ENCODE measurements at regions of chr16 and their contacts with region 1.

Region 1: GRCh38 chr16:72856797-72857196 is 191.1 kb downstream of the ZFHX3 start:
- DNase-seq: peak in 1 of 2 experiments; percentile 71
- H3K4me3 ChIP-seq: no peak overlapping the region
- H3K27ac ChIP-seq: no peak overlapping the region
- H3K4me1 ChIP-seq: peaks cover 0 to 2% (median 0%) of the 10 kb centered on the region in 4 experiments; a peak in 1 of 7 replicates
- H3K27me3 ChIP-seq: no peaks in the 10 kb centered on the region; a peak in 2 of 7 replicates
- CTCF ChIP-seq: peak; percentile 70 to 82 (median 81)
- EP300 ChIP-seq: no peak
- POLR2A ChIP-seq: no peak
- RAD21 ChIP-seq: peak; percentile 67 to 71

Region 2: DNA sequence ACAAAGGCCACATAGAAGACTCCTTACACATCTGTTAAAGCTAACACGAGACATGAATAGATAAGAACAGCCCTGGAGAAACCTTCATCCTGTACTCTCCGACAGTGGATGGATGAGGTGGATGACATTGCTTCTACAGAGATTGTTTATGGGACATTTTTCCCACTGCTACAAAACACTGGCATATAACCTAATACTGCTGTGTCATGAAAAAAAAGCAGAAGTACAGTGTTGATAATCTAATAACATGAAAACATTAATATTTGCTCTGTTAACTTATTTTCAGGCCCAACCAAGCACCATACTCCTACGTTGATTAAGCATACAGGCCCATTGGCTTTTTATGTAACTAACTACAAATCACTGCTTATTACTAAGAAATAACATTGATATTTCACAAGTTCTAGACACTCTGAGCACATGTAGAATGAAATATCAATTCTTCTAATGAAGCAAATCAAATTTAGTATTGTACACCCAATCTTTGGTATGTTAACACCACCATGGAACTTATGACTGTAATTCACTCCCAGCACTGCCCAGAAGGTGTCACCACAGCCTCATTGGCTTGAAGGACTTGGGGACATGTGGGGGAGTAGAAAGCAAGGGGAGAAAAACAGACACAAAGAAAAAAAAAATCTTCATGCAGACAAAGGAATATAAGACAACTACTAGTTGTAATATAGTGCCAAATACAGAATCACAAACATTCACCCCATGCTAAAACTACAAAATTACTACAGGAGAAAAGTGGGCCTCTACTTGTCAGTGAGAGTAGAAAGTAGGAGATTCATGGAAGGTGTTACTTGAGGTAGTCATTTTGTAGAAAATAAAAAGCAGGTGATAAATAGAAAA is 354.8 kb before region 1 on chr16:
- CTCF ChIA-PET with region 1: interaction called, 10 read pairs
- POLR2A ChIA-PET with region 1: no interaction called
- DNase-seq: peak in 1 of 2 experiments; percentile 68
- H3K4me3 ChIP-seq: no peak overlapping the region
- H3K27ac ChIP-seq: no peak overlapping the region
- H3K4me1 ChIP-seq: no peaks in the 10 kb centered on the region
- H3K27me3 ChIP-seq: no peaks in the 10 kb centered on the region
- CTCF ChIP-seq: peak; percentile 60 to 84 (median 83)
- EP300 ChIP-seq: no peak
- POLR2A ChIP-seq: no peak
- RAD21 ChIP-seq: peak; percentile 96 to 97

Region 3: DNA sequence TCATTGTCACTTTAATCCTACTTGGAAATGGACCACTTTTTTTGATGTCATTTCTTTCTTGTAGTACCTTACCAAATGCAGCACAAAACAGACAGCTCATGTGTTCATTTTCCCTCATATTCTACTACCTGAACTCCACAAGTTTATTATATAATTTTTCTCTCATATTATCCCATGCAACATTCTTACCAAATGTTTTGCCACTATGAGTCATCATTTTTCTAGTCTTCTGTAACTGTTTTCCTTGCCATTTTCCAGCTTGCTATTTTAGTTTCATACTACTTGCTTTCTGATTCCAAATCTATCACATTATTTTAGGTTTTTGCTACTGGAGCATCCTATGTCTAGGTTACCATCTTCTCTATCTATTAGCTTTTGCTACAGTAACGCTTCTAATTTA is 141.5 kb before region 1 on chr16:
- CTCF ChIA-PET with region 1: no interaction called
- POLR2A ChIA-PET with region 1: no interaction called
- DNase-seq: no peak
- H3K4me3 ChIP-seq: no peak overlapping the region
- H3K27ac ChIP-seq: no peak overlapping the region
- H3K4me1 ChIP-seq: no peaks in the 10 kb centered on the region; a peak in 1 of 7 replicates
- H3K27me3 ChIP-seq: peaks cover 0 to 1% (median 0%) of the 10 kb centered on the region in 4 experiments; a peak in 1 of 7 replicates
- CTCF ChIP-seq: no peak
- EP300 ChIP-seq: no peak
- POLR2A ChIP-seq: no peak
- RAD21 ChIP-seq: no peak

Region 4: GRCh38 chr16:72908362-72909167 is 51.8 kb after region 1 on chr16:
- CTCF ChIA-PET with region 1: interaction called, 20 read pairs
- POLR2A ChIA-PET with region 1: no interaction called
- DNase-seq: no peak
- H3K4me3 ChIP-seq: no peak overlapping the region
- H3K27ac ChIP-seq: no peak overlapping the region
- H3K4me1 ChIP-seq: peaks cover 0 to 2% (median 0%) of the 10 kb centered on the region in 4 experiments; a peak in 2 of 7 replicates
- H3K27me3 ChIP-seq: no peaks in the 10 kb centered on the region
- CTCF ChIP-seq: no peak
- EP300 ChIP-seq: no peak
- POLR2A ChIP-seq: no peak
- RAD21 ChIP-seq: no peak

Region 5: GRCh38 chr16:72938795-72939164 is 82.0 kb after region 1 on chr16:
- CTCF ChIA-PET with region 1: interaction called, 15 read pairs
- POLR2A ChIA-PET with region 1: no interaction called
- DNase-seq: no peak
- H3K4me3 ChIP-seq: no peak overlapping the region
- H3K27ac ChIP-seq: no peak overlapping the region
- H3K4me1 ChIP-seq: peaks cover 5 to 17% (median 7%) of the 10 kb centered on the region in 4 experiments; a peak in 6 of 7 replicates
- H3K27me3 ChIP-seq: no peaks in the 10 kb centered on the region
- CTCF ChIP-seq: no peak
- EP300 ChIP-seq: no peak
- POLR2A ChIP-seq: no peak
- RAD21 ChIP-seq: no peak

Region 6: DNA sequence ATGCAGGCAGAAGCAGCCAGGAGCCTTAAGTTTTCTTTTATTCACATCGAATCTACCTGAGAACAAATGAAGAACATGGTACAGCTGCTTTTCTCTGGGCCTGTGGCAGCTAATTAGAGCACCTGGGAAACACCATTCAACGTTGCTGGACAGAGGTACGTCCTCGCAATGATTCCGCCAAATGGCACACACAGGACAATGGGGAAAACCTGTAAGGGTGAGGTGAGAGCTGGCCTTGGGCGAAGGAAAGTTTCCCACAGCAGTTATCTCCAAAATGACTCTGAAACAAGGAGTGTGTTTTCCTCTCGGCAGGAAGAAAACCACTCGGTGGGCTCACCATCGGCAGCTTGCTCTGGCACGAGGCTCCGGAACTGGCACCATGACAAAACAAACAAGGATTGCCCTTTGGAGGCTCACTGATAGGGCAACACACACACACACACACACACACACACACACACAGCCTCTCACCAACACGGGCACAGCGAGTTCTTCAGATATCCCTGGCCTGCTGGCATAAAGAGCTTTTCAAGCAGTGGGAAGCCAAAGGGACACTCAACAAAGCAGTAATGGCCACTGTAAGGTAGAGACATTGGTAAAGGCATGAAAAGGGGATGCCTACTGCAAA is 117.5 kb after region 1 on chr16:
- CTCF ChIA-PET with region 1: interaction called, 10 read pairs
- POLR2A ChIA-PET with region 1: no interaction called
- DNase-seq: no peak
- H3K4me3 ChIP-seq: no peak overlapping the region
- H3K27ac ChIP-seq: no peak overlapping the region
- H3K4me1 ChIP-seq: no peaks in the 10 kb centered on the region
- H3K27me3 ChIP-seq: no peaks in the 10 kb centered on the region
- CTCF ChIP-seq: no peak
- EP300 ChIP-seq: no peak
- POLR2A ChIP-seq: no peak
- RAD21 ChIP-seq: no peak

Region 7: DNA sequence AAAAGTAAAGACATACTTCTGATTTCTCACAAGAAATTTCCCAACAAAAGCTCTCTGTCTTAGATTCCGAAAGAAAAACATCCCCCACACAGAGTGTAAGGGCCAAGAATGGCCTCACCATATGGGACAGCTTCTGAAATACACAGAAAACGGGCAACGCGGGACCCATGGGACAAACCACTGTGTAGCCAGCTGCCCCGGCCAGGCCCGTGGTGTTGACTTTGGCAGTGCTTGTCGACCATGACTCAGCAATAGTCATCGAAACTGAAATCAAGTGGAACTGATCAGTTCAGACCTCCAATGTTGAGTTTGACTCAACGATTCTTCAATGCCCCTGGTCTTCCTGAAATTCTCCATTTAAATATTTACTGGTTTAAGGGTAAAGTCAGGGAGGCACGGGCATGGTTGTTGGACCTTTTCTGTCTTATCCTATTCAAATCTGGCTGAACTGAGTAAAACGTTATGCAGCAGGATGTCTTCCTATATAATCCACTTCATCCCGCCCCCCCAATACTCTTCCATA is 163.6 kb after region 1 on chr16:
- CTCF ChIA-PET with region 1: interaction called, 10 read pairs
- POLR2A ChIA-PET with region 1: no interaction called
- DNase-seq: no peak
- H3K4me3 ChIP-seq: no peak overlapping the region
- H3K27ac ChIP-seq: no peak overlapping the region
- H3K4me1 ChIP-seq: no peaks in the 10 kb centered on the region; a peak in 1 of 7 replicates
- H3K27me3 ChIP-seq: peaks cover 0 to 34% (median 18%) of the 10 kb centered on the region in 4 experiments; a peak in 6 of 7 replicates
- CTCF ChIP-seq: no peak
- EP300 ChIP-seq: no peak
- POLR2A ChIP-seq: no peak
- RAD21 ChIP-seq: no peak

Measured in H1 (cell line).